ENCODE measurements at regions of chr7 and their contacts with region 1.

Region 1: DNA sequence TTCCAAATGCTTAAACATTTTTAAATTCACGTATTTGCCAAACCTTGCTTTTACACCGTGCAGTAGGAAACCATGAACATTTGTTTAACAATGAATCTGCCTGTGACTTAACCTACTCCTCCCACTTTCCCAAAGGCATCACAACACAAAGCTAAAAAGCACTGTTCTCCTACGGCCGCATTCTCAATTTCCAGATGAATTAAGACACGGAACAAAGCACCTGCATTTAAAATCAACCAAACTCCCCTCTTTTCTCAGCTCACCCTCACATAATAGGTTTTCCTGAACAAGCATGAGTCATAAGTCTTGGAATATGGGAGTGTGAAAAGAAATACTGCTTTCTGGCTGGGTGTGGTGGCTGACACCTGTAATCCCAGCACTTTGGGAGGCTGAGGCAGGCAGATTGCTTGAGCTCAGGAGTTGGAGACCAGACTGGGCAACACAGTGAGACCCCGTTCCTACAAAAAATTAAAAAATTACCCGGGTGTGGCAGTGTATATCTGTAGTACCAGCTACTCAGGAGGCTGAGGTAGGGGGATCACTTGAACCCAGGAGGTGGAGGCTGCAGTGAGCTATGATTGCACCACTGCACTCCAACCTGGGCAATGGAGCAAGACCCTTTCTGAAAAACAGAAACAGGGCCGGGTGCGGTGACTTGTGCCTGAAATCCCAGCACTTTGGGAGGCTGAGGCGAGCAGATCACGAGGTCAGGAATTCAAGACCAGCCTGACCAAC is 51.7 kb upstream of the CYTH3 start:
- DNase-seq: no peak
- H3K4me3 Mint-ChIP-seq: no peak overlapping the region
- H3K27ac Mint-ChIP-seq: no peak overlapping the region
- H3K4me1 Mint-ChIP-seq: peaks cover 5% of the 10 kb centered on the region
- H3K27me3 Mint-ChIP-seq: no peaks in the 10 kb centered on the region
- CTCF ChIP-seq: no peak

Region 2: GRCh38 chr7:5997222-5997808 is 326.8 kb before region 1 on chr7:
- CTCF ChIA-PET with region 1: interaction called, 6 read pairs
- POLR2A ChIA-PET with region 1: interaction called, 4 read pairs
- intact Hi-C with region 1: loop called (anchors 10 kb)
- DNase-seq: peak; percentile 62
- H3K4me3 Mint-ChIP-seq: no peak overlapping the region
- H3K27ac Mint-ChIP-seq: no peak overlapping the region
- H3K4me1 Mint-ChIP-seq: peaks cover 11% of the 10 kb centered on the region
- H3K27me3 Mint-ChIP-seq: no peaks in the 10 kb centered on the region
- CTCF ChIP-seq: peak; percentile 51

Region 3: DNA sequence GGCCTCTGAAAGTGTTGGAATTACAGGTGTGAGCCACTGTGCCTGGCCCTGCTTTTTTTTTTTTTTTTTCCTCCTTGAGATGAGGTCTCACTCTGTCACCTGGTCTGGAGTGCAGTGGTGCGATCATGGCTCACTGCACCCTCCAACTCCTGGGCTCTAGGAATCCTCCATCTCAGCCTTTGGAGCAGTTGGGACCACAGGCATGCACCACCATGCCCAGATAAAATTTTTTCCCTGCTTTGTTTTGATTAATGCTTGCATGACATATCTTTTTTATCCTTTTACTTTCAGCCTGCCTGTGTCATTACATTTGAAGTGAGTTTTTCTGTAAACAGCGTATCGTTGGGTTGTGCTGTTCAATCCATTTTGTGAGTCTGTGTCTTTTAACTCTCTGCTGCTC is 195.9 kb before region 1 on chr7:
- CTCF ChIA-PET with region 1: interaction called, 11 read pairs
- POLR2A ChIA-PET with region 1: no interaction called
- intact Hi-C with region 1: no loop called
- DNase-seq: no peak
- H3K4me3 Mint-ChIP-seq: no peak overlapping the region
- H3K27ac Mint-ChIP-seq: peak overlapping the region; percentile 54
- H3K4me1 Mint-ChIP-seq: no peaks in the 10 kb centered on the region
- H3K27me3 Mint-ChIP-seq: no peaks in the 10 kb centered on the region
- CTCF ChIP-seq: no peak

Region 4: GRCh38 chr7:6175645-6176044 is 148.5 kb before region 1 on chr7:
- CTCF ChIA-PET with region 1: interaction called, 5 read pairs
- POLR2A ChIA-PET with region 1: interaction called, 3 read pairs
- intact Hi-C with region 1: loop called (anchors 5 kb)
- DNase-seq: peak; percentile 79
- H3K4me3 Mint-ChIP-seq: no peak overlapping the region
- H3K27ac Mint-ChIP-seq: no peak overlapping the region
- H3K4me1 Mint-ChIP-seq: peaks cover 5% of the 10 kb centered on the region
- H3K27me3 Mint-ChIP-seq: no peaks in the 10 kb centered on the region
- CTCF ChIP-seq: no peak

Region 5: DNA sequence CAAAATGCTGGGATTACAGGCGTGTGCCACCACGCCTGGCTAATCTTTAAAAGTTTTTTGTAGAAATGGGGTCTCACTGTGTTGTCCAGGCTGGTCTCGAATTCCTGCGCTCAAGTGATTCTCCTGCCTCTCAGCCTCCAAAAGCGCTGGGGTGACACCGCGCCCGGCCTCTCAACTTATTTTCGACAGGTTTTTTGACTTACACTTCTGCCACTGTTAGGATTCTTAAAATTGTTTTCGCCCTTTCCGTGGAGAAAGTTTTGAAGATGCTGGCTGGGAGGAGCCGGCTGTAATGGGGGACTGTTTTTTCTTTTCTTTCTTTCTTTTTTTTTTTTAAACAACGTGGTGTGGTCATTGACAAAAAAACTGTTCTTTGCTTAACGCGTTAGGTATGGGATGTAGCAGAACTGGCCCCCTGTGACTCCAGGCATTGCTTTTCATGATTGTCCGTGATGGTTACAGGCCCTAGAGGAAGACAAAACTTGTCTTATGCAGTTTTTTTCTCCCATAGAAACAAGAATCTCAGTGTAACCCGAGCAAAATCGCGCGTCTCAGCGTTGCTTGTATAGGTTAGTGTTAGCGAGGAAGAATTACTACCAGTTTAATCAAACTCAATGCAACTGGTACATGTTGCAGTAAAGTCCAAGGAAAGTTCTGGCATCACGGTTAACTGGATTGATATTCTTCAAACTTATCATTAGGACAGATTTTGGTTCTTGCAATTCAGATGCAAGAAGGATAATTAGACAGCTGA is 51.4 kb after region 1 on chr7:
- CTCF ChIA-PET with region 1: no interaction called
- POLR2A ChIA-PET with region 1: no interaction called
- intact Hi-C with region 1: no loop called
- DNase-seq: peak; percentile 40
- H3K4me3 Mint-ChIP-seq: peak overlapping the region; percentile 95
- H3K27ac Mint-ChIP-seq: peak overlapping the region; percentile 92
- H3K4me1 Mint-ChIP-seq: peaks cover 23% of the 10 kb centered on the region
- H3K27me3 Mint-ChIP-seq: no peaks in the 10 kb centered on the region
- CTCF ChIP-seq: no peak